Ascending aorta (tissue), 2 donors: ENCODE measurements at regions of chr7 and their contacts with region 1.

Region 1: DNA sequence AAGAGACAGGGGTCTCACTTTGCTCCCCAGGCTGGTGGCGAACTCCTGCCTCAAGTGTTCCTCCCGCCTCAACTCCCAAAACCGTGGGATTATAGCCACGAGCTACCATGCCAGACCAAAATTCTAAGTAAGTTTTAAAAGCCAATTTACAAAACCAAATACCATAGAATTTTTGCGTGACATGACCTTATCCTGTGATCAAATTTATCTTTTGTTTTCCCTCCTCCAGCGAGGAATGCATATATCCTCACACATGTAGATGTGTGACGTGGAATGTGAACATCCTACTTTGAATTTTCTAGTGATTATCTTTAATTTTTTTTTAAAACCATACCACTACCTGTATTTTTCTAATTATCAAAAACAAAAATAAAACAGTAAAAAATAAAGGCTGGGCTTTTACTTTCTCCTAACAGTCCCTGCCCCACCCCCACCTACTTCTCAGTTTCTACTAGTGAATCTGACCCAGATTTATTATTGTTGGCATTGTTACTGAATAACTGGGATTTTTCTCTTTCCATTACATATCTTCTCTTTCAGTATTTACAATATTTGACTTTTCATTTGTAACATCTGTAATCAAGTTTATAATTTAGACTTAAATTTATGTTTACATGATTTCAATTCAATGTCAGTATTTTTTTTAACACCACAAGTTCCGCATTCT is 26.0 kb downstream of the CYTH3 start:
- DNase-seq: no peak
- H3K4me3 ChIP-seq: no peak overlapping the region
- H3K27ac ChIP-seq: no peak overlapping the region
- H3K4me1 ChIP-seq: peaks cover 5 to 25% of the 10 kb centered on the region in 2 donors
- H3K27me3 ChIP-seq: no peaks in the 10 kb centered on the region
- CTCF ChIP-seq: no peak

Region 2: DNA sequence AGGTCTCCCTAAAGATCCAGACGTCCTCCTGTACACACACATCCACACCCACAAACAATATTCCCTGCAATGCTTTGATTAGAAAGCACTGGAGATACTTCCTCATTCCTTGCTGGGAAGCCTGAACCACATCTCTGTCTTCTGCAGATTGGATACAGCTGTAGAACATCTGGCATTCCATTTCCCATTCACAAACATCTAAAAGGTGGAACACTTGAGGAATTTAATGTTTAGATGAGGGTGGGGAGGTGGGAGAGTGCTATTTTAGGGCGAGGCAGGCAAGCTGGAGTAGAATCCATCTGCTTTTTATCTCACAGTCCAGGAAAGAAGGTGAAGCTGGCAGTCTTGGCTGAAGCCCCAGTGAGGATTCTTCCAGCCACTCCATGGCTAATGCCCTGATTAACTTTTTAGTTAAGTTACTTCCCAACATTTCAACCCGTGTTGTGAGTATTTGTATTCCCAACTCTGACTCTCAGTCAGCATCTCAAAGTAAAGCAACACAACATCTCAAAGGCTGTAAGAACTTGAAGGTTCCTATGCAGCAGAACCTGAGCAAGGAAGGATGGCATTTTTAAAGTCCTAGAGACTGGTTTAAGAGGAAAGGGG is 20.1 kb before region 1 on chr7:
- intact Hi-C with region 1: loop called (anchors 2 kb)
- DNase-seq: no peak
- H3K4me3 ChIP-seq: no peak overlapping the region
- H3K27ac ChIP-seq: peak overlapping the region in 1 of 2 donors; percentile 37
- H3K4me1 ChIP-seq: peaks cover 4 to 37% of the 10 kb centered on the region in 2 donors
- H3K27me3 ChIP-seq: no peaks in the 10 kb centered on the region
- CTCF ChIP-seq: no peak

Region 3: GRCh38 chr7:6317797-6318438 is 71.5 kb after region 1 on chr7:
- intact Hi-C with region 1: no loop called
- DNase-seq: peak; percentile 76 to 94
- H3K4me3 ChIP-seq: peak overlapping the region; percentile 29 to 49
- H3K27ac ChIP-seq: peak overlapping the region; percentile 82 to 85
- H3K4me1 ChIP-seq: peaks cover 3 to 25% of the 10 kb centered on the region in 2 donors
- H3K27me3 ChIP-seq: no peaks in the 10 kb centered on the region
- CTCF ChIP-seq: no peak